Pancreas (tissue), 10 donors: ENCODE measurements at regions of chr19 and their contacts with region 1.

Region 1: GRCh38 chr19:16180611-16181010 is 4.6 kb upstream of the FAM32A start:
- DNase-seq: no peak
- ATAC-seq: no peak
- H3K4me3 ChIP-seq: no peak overlapping the region
- H3K27ac ChIP-seq: no peak overlapping the region
- H3K4me1 ChIP-seq: no peaks in the 10 kb centered on the region
- H3K27me3 ChIP-seq: peaks cover 0 to 6% (median 0%) of the 10 kb centered on the region in 4 donors
- CTCF ChIP-seq: no peak

Region 2: DNA sequence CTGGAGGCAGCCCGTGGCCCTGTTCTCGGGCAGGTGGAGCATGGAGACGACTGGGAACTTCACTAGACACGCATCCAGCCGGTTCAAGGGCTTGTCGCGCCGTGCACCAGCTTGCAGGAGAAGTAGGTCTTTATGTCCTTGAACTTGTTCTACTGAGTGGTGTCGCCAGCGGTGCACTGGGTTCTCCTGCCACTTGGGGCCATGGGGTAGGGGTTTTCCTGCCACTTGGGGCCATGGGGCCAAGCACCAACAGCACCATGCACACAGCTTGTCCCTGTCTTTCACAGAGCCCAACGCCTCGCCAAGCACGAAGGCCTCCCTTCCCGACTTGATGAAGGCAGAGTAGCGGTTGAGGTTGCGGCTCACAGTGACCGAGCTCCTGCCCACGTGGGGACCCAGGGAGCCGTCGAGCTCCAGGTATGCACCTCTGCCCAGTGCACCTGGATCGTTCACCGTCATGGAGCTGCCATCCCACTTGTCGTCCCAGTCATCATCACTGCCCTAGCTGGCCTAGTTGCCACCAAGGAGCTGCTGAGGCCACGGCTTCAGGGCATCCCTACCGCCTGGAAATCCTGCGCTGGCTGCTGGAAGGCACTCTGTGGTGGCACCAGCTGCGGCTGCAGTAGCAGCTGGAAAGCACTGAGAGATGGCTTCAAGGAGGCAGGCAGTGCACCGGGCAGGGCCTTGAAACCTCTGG is 144.9 kb before region 1 on chr19:
- intact Hi-C with region 1: loop called in 2 of 3 experiments (anchors 5 kb)
- DNase-seq: peak in 1 of 6 donors; percentile 46
- ATAC-seq: no peak
- H3K4me3 ChIP-seq: no peak overlapping the region
- H3K27ac ChIP-seq: no peak overlapping the region
- H3K4me1 ChIP-seq: no peaks in the 10 kb centered on the region
- H3K27me3 ChIP-seq: no peaks in the 10 kb centered on the region
- CTCF ChIP-seq: no peak

Region 3: GRCh38 chr19:16041299-16041990 is 139.2 kb before region 1 on chr19:
- intact Hi-C with region 1: loop called in 2 of 3 experiments (anchors 5 kb)
- DNase-seq: peak; percentile 64 to 98 (median 86)
- ATAC-seq: peak; percentile 97 to 100 (median 98)
- H3K4me3 ChIP-seq: no peak overlapping the region
- H3K27ac ChIP-seq: no peak overlapping the region
- H3K4me1 ChIP-seq: no peaks in the 10 kb centered on the region
- H3K27me3 ChIP-seq: no peaks in the 10 kb centered on the region
- CTCF ChIP-seq: peak; percentile 94 to 99 (median 96)